ENCODE measurements at regions of chr11 and their contacts with region 1.

Region 1: GRCh38 chr11:120235024-120235861 is 4.7 kb upstream of the POU2F3 start:
- DNase-seq: peak; percentile 84 to 90
- H3K4me3 ChIP-seq: no peak overlapping the region
- H3K27ac ChIP-seq: no peak overlapping the region
- H3K4me1 ChIP-seq: peaks cover 6 to 11% (median 7%) of the 10 kb centered on the region in 4 donors
- H3K27me3 ChIP-seq: peaks cover 0 to 44% (median 24%) of the 10 kb centered on the region in 3 donors
- CTCF ChIP-seq: peak in 6 of 7 experiments; percentile 54 to 84 (median 77)
- EP300 ChIP-seq: no peak
- POLR2A ChIP-seq: no peak

Region 2: GRCh38 chr11:120293043-120293800 is 58.0 kb after region 1 on chr11:
- intact Hi-C with region 1: loop called (anchors 5 kb)
- DNase-seq: no peak
- H3K4me3 ChIP-seq: no peak overlapping the region
- H3K27ac ChIP-seq: no peak overlapping the region
- H3K4me1 ChIP-seq: peaks cover 0 to 4% (median 0%) of the 10 kb centered on the region in 4 donors
- H3K27me3 ChIP-seq: peaks cover 0 to 25% (median 0%) of the 10 kb centered on the region in 3 donors
- CTCF ChIP-seq: no peak
- EP300 ChIP-seq: no peak
- POLR2A ChIP-seq: no peak